ENCODE measurements at regions of chr9 and their contacts with region 1.

Region 1: GRCh38 chr9:131366761-131367401 is 27.0 kb upstream of the PRRC2B start:
- DNase-seq: peak in 3 of 14 experiments; percentile 7 to 34 (median 25)
- ATAC-seq: no peak
- H3K4me3 ChIP-seq: no peak overlapping the region
- H3K4me3 Mint-ChIP-seq: no peak overlapping the region
- H3K27ac ChIP-seq: no peak overlapping the region
- H3K27ac Mint-ChIP-seq: no peak overlapping the region
- H3K4me1 ChIP-seq: peaks cover 2% of the 10 kb centered on the region
- H3K4me1 Mint-ChIP-seq: peaks cover 6% of the 10 kb centered on the region
- H3K27me3 ChIP-seq: no peaks in the 10 kb centered on the region
- H3K27me3 Mint-ChIP-seq: no peaks in the 10 kb centered on the region
- CTCF ChIP-seq: peak; percentile 40

Region 2: DNA sequence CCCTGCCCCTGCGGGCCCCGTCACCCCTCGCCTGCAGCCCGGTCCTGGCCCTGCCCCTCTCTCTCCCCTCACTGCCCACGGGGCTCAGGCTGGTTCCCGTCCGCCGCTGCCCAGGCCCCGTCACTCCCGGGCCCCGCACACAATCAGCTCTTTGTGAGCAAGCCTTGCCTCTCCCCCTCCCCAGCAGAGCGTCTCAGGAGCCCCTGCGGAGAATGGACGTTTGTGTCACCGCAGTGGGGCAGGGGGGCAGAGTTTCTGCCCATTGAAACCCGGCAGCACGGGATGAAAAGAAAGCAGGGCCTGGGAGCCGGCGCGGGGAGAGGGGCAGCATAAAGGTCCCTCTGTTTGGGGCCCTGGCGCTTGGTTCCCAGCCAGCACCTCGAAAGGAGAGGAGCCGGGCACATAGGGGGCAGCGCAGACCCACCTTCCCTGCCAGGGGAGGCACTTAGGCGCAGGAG is 255.0 kb before region 1 on chr9:
- CTCF ChIA-PET with region 1: no interaction called
- POLR2A ChIA-PET with region 1: no interaction called
- intact Hi-C with region 1: no loop called
- DNase-seq: no peak
- ATAC-seq: no peak
- H3K4me3 ChIP-seq: no peak overlapping the region
- H3K4me3 Mint-ChIP-seq: no peak overlapping the region
- H3K27ac ChIP-seq: no peak overlapping the region
- H3K27ac Mint-ChIP-seq: no peak overlapping the region
- H3K4me1 ChIP-seq: no peaks in the 10 kb centered on the region
- H3K4me1 Mint-ChIP-seq: no peaks in the 10 kb centered on the region
- H3K27me3 ChIP-seq: no peaks in the 10 kb centered on the region
- H3K27me3 Mint-ChIP-seq: peaks cover under 1% of the 10 kb centered on the region
- CTCF ChIP-seq: no peak

Region 3: DNA sequence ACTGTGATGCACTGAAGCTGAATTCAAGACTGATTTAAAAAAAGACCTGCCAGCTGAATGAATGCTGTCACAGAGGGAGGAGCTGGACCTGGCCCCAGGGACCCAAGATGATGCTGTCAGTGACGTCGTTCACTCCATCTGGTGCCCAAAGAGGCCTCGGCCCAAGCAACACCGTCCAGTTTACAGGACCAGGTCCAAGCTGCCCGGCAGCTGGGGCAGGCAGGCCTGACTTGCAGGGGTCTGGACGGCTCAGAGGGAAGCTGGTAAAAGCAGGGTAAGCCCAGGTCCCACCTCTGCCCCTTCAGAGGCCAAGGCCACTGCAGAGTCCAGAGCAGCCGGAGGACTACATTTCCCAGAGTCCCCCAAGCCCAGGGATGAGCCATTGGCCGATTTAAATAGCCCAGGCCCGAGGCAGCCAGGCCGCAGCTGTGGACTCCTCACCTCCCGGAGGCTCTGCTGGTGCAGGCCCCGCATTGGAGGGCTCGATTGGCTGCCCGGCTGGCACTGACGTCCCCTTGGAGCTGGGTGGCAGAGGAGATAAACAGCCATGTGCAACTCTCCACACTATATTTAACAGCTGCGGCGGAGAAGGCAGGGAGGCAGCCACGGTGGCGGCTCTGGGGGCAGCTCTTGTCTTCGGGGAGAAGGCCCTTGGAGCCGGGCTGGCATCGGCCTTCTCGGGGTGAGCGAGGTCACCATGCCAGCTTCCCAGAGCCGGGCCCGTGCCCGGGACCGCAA is 77.4 kb before region 1 on chr9 and contains the start of gene PLPP7:
- CTCF ChIA-PET with region 1: no interaction called
- POLR2A ChIA-PET with region 1: no interaction called
- intact Hi-C with region 1: no loop called
- DNase-seq: peak in 1 of 14 experiments; percentile 21
- ATAC-seq: no peak
- H3K4me3 ChIP-seq: no peak within 1 kb of the TSS
- H3K4me3 Mint-ChIP-seq: no peak within 1 kb of the TSS
- H3K27ac ChIP-seq: no peak within 1 kb of the TSS
- H3K27ac Mint-ChIP-seq: no peak within 1 kb of the TSS
- H3K4me1 ChIP-seq: no peaks in the 10 kb centered on the region
- H3K4me1 Mint-ChIP-seq: no peaks in the 10 kb centered on the region
- H3K27me3 ChIP-seq: no peaks in the 10 kb centered on the region
- H3K27me3 Mint-ChIP-seq: no peaks in the 10 kb centered on the region
- CTCF ChIP-seq: no peak
- total RNA-seq, gene PLPP7: 0.22 TPM in 1 of 2 experiments, not detected in the other

Region 4: GRCh38 chr9:131407717-131408195 is 40.9 kb after region 1 on chr9:
- CTCF ChIA-PET with region 1: interaction called, 18 read pairs
- POLR2A ChIA-PET with region 1: interaction called, 68 read pairs
- intact Hi-C with region 1: loop called in 1 of 2 experiments (anchors 5 kb)
- DNase-seq: peak in 12 of 14 experiments; percentile 26 to 81 (median 52)
- ATAC-seq: peak; percentile 78
- H3K4me3 ChIP-seq: peak overlapping the region; percentile 39
- H3K4me3 Mint-ChIP-seq: peak overlapping the region; percentile 89
- H3K27ac ChIP-seq: peak overlapping the region; percentile 18 to 39
- H3K27ac Mint-ChIP-seq: peak overlapping the region; percentile 86
- H3K4me1 ChIP-seq: peaks cover 93% of the 10 kb centered on the region
- H3K4me1 Mint-ChIP-seq: peaks cover 93% of the 10 kb centered on the region
- H3K27me3 ChIP-seq: no peaks in the 10 kb centered on the region
- H3K27me3 Mint-ChIP-seq: no peaks in the 10 kb centered on the region
- CTCF ChIP-seq: peak; percentile 71

Region 5: DNA sequence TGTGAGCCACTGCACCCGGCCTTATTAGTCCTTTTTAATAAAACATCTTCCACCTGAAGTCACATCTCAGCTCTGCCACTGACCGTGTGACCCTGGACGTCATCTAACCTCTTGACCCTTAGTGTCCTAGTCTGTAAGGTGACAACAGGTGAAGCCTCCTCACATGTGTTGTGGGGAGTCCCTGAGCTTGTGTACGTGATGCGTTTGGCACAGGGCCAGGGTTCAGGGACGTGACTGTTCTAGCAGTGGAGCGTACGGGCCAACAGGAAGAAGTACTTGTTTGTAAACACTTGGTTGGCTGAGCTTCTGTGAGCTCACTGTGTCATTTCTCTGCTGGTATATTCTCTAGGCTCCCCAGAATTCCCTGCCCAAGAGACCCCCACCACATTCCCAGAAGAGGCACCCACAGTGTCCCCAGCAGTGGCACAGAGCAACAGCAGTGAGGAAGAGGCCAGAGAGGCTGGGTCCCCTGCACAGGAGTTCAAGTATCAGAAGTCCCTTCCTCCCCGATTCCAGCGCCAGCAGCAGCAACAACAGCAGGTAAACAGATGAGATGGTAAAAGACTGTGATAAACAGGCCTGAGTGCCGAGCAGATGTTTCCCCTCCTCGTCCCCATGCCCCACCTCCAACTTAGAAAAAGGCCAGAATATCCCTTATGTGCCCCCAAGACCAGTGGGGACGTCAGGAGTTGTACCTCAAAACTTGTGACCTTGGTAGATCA is 100.5 kb after region 1 on chr9:
- CTCF ChIA-PET with region 1: no interaction called
- POLR2A ChIA-PET with region 1: no interaction called
- intact Hi-C with region 1: no loop called
- DNase-seq: peak in 2 of 14 experiments; percentile 23 to 32
- ATAC-seq: no peak
- H3K4me3 ChIP-seq: no peak overlapping the region
- H3K4me3 Mint-ChIP-seq: no peak overlapping the region
- H3K27ac ChIP-seq: no peak overlapping the region
- H3K27ac Mint-ChIP-seq: peak overlapping the region; percentile 30
- H3K4me1 ChIP-seq: no peaks in the 10 kb centered on the region
- H3K4me1 Mint-ChIP-seq: peaks cover 9% of the 10 kb centered on the region
- H3K27me3 ChIP-seq: no peaks in the 10 kb centered on the region
- H3K27me3 Mint-ChIP-seq: no peaks in the 10 kb centered on the region
- CTCF ChIP-seq: no peak

Region 6: GRCh38 chr9:131478421-131478868 is 111.6 kb after region 1 on chr9:
- CTCF ChIA-PET with region 1: no interaction called
- POLR2A ChIA-PET with region 1: no interaction called
- intact Hi-C with region 1: loop called in 1 of 2 experiments (anchors 5 kb)
- DNase-seq: peak; percentile 40 to 76 (median 57)
- ATAC-seq: peak; percentile 65
- H3K4me3 ChIP-seq: no peak overlapping the region
- H3K4me3 Mint-ChIP-seq: no peak overlapping the region
- H3K27ac ChIP-seq: no peak overlapping the region
- H3K27ac Mint-ChIP-seq: peak overlapping the region; percentile 8
- H3K4me1 ChIP-seq: no peaks in the 10 kb centered on the region
- H3K4me1 Mint-ChIP-seq: peaks cover 6% of the 10 kb centered on the region
- H3K27me3 ChIP-seq: no peaks in the 10 kb centered on the region
- H3K27me3 Mint-ChIP-seq: no peaks in the 10 kb centered on the region
- CTCF ChIP-seq: peak; percentile 65

Region 7: DNA sequence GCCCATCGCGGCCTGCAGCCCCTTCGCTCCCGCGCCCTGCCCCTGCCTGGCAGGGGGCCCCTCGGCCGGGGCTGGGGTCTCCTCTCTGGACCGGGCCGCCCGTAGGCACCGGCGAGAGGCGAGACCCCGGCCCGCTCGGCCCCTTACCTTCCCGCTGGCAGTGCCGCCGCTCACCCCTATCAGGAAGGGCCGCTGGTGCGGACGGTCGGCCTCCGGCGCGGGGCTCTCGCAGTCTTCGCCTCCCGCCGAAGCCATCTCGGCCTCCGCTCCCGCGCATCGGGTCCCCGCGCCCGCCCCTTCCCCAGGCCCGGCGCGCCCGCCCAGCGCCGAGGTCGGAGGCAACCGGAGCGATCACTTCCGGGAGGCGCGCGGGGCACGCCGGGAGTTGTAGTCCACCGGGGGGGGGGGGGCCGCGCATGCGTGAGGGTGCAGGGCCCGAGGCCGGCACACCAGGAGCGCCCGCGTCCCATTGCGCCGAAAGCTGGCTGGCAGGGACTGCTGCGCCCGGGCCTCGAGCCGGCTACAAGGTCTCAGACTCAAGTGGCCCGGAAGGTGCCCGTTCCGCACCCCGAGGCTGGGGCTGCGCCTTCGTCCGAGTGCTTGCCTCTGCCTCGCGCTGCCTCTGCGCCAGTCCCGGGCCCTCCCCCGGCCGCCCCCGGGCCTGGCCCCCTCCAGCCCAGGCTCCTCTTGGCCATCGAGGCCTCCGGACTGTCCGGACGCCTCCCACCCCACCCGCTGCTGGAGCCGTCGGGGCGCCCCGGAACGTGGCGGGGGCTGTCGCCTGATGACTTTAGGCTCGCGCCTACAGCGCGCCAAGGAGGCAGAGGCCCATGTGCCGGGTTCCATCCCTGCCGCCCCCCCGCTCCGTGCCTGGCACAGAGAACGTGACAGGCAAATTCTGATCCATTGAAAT is 164.3 kb after region 1 on chr9 and contains the start of gene UCK1:
- CTCF ChIA-PET with region 1: no interaction called
- POLR2A ChIA-PET with region 1: no interaction called
- intact Hi-C with region 1: loop called in 1 of 2 experiments (anchors 5 kb)
- DNase-seq: peak; percentile 57 to 93 (median 72)
- ATAC-seq: peak; percentile 91
- H3K4me3 ChIP-seq: peak within 1 kb of the TSS; percentile 72
- H3K4me3 Mint-ChIP-seq: peak within 1 kb of the TSS; percentile 85
- H3K27ac ChIP-seq: peak within 1 kb of the TSS; percentile 13 to 44
- H3K27ac Mint-ChIP-seq: no peak within 1 kb of the TSS
- H3K4me1 ChIP-seq: peaks cover 44% of the 10 kb centered on the region
- H3K4me1 Mint-ChIP-seq: peaks cover 42% of the 10 kb centered on the region
- H3K27me3 ChIP-seq: no peaks in the 10 kb centered on the region
- H3K27me3 Mint-ChIP-seq: no peaks in the 10 kb centered on the region
- CTCF ChIP-seq: no peak
- total RNA-seq, gene UCK1: 22.1 to 22.5 TPM